Naive thymus-derived CD4-positive, alpha-beta T cell (primary cell): ENCODE measurements at regions of chr15 and their contacts with region 1.

Region 1: GRCh38 chr15:92984161-92984560 is 84.0 kb downstream of the CHD2 start:
- DNase-seq: no peak
- ATAC-seq: no peak
- H3K4me3 ChIP-seq: no peak overlapping the region
- H3K4me3 Mint-ChIP-seq: no peak overlapping the region
- H3K27ac ChIP-seq: no peak overlapping the region
- H3K27ac Mint-ChIP-seq: peak overlapping the region in 7 of 9 donors; percentile 1 to 83 (median 36)
- H3K4me1 ChIP-seq: no peaks in the 10 kb centered on the region
- H3K4me1 Mint-ChIP-seq: peaks cover under 1 to 30% (median 13%) of the 10 kb centered on the region in 7 donors
- H3K27me3 ChIP-seq: no peaks in the 10 kb centered on the region
- H3K27me3 Mint-ChIP-seq: no peaks in the 10 kb centered on the region

Region 2: DNA sequence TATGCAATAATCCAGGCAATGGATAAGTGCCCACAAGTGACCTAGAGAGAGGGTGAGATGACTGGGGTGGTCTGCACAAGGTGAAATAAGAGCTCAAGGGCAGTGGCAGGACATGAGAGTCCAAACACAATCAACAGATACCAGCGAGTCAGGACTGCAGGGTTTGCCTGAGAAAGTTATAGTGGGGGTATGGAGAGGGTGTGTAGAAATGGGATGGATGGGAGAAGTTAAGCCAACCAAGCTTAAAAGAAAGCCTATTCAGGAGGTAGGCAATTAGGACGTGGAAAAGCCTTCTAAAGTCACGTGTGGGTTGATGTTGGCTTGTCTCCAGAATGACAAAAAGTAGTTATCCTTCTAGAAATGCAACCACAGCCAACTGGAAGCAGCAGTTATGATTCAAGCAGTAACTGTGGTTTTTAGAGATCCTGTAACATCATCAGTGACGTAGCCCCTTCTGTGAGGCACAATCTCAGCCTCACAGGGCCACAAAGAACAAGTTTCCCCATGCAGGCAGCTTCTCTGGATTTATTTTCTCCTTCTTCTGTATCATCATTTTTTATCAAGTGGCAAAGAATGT is 384.7 kb before region 1 on chr15:
- CTCF ChIA-PET with region 1: no interaction called
- POLR2A ChIA-PET with region 1: no interaction called
- intact Hi-C with region 1: no loop called
- DNase-seq: no peak
- ATAC-seq: no peak
- H3K4me3 ChIP-seq: no peak overlapping the region
- H3K4me3 Mint-ChIP-seq: no peak overlapping the region
- H3K27ac ChIP-seq: no peak overlapping the region
- H3K27ac Mint-ChIP-seq: no peak overlapping the region
- H3K4me1 ChIP-seq: no peaks in the 10 kb centered on the region
- H3K4me1 Mint-ChIP-seq: no peaks in the 10 kb centered on the region
- H3K27me3 ChIP-seq: no peaks in the 10 kb centered on the region
- H3K27me3 Mint-ChIP-seq: peaks cover 0 to 35% (median 18%) of the 10 kb centered on the region in 5 donors

Region 3: DNA sequence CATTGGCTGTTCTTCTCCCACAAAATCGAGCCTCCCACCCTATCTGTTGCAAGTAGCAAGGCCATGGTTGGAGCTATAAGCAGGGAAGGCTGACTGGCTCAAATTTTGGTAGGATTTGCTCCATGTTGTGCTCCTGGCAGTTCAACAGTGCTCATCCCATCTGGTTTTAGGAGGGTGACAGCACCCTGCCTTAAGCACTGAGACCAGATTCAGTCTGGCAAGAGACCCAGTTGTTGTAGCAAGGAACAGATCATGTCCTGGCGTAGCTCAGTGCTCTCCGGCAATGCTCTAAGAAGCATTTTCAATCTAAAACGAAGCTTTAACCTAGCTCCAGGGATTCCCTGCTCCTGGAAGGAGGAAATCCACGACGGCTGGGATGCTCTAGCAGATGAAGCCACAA is 13.7 kb after region 1 on chr15:
- CTCF ChIA-PET with region 1: interaction called, 3 read pairs
- POLR2A ChIA-PET with region 1: no interaction called
- intact Hi-C with region 1: loop called in 1 of 2 experiments (anchors 2 kb)
- DNase-seq: no peak
- ATAC-seq: no peak
- H3K4me3 ChIP-seq: no peak overlapping the region
- H3K4me3 Mint-ChIP-seq: no peak overlapping the region
- H3K27ac ChIP-seq: peak overlapping the region; percentile 39
- H3K27ac Mint-ChIP-seq: peak overlapping the region in 7 of 9 donors; percentile 28 to 85 (median 80)
- H3K4me1 ChIP-seq: no peaks in the 10 kb centered on the region
- H3K4me1 Mint-ChIP-seq: peaks cover 4 to 43% (median 32%) of the 10 kb centered on the region in 7 donors
- H3K27me3 ChIP-seq: no peaks in the 10 kb centered on the region
- H3K27me3 Mint-ChIP-seq: no peaks in the 10 kb centered on the region